MCF 10A (cell line): ENCODE measurements at regions of chr20 and their contacts with region 1.

Region 1: GRCh38 chr20:54345301-54345724 is 130.1 kb upstream of the DOK5 start:
- DNase-seq: peak; percentile 67
- H3K4me3 Mint-ChIP-seq: peak overlapping the region; percentile 28
- H3K27ac Mint-ChIP-seq: no peak overlapping the region
- H3K4me1 Mint-ChIP-seq: peaks cover 30% of the 10 kb centered on the region
- H3K27me3 Mint-ChIP-seq: no peaks in the 10 kb centered on the region
- CTCF ChIP-seq: no peak

Region 2: DNA sequence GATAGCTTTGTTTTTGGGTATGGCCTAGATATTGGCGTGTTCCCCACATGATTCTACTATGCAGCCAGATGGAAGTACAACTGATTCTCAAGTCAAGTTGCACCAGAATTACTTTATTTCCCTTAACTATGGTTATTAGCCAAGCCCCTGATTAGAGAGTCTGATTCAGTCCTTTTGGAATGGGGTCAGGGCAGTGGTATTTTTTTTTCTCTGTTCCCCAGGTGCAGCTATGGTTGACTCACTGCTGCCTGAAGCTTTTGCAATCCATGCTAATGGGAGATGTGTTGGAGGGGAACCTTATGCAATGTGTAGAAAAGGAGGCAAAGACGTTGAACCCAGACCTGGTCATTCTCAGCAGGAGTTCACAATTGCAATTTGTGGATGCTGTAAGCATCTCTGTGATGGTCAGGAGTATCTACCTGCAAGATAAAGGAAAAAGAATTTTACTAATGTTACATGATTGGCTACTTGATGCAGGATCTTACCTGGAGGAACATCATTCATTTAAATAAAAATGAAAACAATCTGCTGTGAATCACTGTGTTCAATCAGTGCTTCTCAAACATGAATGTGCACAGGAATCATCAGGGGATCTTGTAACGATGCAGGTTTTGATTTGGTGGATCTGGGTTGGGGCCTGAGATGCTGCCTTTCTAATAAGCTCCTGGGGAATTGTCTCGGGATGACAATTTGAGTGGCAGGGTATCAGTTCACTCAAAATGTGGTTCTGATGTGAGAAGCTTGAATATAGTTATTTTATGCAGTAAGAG is 88.1 kb before region 1 on chr20:
- CTCF ChIA-PET with region 1: no interaction called
- POLR2A ChIA-PET with region 1: interaction called, 4 read pairs
- intact Hi-C with region 1: loop called (anchors 10 kb)
- DNase-seq: peak; percentile 89
- H3K4me3 Mint-ChIP-seq: no peak overlapping the region
- H3K27ac Mint-ChIP-seq: no peak overlapping the region
- H3K4me1 Mint-ChIP-seq: peaks cover 32% of the 10 kb centered on the region
- H3K27me3 Mint-ChIP-seq: no peaks in the 10 kb centered on the region
- CTCF ChIP-seq: no peak

Region 3: DNA sequence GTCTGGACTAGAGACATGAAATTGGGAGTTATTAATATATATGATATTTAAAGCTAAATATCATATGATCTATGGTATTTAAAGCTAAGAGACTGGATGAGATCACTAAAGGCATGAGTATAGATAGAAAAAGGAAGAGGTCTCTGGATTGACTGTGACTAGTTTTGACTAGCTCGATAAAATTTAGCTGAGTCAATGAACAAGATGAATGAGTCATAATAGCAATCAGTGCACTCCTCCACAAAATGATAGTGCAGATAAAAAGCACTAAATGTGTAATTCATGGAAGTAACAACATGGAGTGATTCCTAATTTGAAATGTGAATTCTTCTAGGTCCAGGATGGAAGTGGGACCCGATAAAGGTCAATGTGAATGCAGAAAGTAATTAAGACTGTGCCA is 10.0 kb before region 1 on chr20:
- CTCF ChIA-PET with region 1: no interaction called
- POLR2A ChIA-PET with region 1: interaction called, 11 read pairs
- intact Hi-C with region 1: no loop called
- DNase-seq: no peak
- H3K4me3 Mint-ChIP-seq: no peak overlapping the region
- H3K27ac Mint-ChIP-seq: no peak overlapping the region
- H3K4me1 Mint-ChIP-seq: peaks cover 11% of the 10 kb centered on the region
- H3K27me3 Mint-ChIP-seq: no peaks in the 10 kb centered on the region
- CTCF ChIP-seq: no peak